GM12878 (cell line): ENCODE measurements at regions of chr6 and their contacts with region 1.

Region 1: DNA sequence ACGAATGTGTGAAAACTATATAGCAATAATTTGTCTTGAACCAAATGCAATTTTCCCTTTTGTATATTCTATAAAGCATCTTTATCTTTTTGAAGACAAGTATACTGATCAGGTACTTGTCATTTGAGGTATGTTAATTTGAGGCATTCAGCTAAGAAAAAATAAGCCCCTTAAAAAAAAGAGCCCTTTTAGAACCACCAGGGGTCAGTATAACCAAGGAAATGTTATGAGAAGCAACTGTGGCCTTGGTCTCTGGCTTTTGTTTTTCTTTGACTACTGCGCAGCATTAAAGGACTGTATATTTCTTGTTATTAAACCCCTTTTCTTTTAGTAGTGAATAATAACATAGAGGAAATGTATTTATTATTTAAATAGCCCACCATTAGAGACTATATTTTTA is 43.1 kb downstream of the CD109 start:
- DNase-seq: no peak
- ATAC-seq: peak; percentile 88
- H3K4me3 ChIP-seq: no peak overlapping the region
- H3K27ac ChIP-seq: no peak overlapping the region
- H3K4me1 ChIP-seq: no peaks in the 10 kb centered on the region; the same call in 1 of the 2 replicates
- H3K27me3 ChIP-seq: no peaks in the 10 kb centered on the region
- CTCF ChIP-seq: peak; percentile 57 to 81 (median 66)
- EP300 ChIP-seq: no peak
- POLR2A ChIP-seq: no peak
- RAD21 ChIP-seq: peak; percentile 94

Region 2: GRCh38 chr6:73675466-73676098 is 63.5 kb before region 1 on chr6:
- CTCF ChIA-PET with region 1: interaction called, 213 read pairs
- POLR2A ChIA-PET with region 1: no interaction called
- RAD21 ChIA-PET with region 1: interaction called, 63 read pairs
- SMC1A ChIA-PET with region 1: interaction called, 120 read pairs
- in situ Hi-C with region 1: loop called (anchors 5 kb)
- intact Hi-C with region 1: no loop called
- DNase-seq: no peak
- ATAC-seq: peak; percentile 98
- H3K4me3 ChIP-seq: no peak overlapping the region
- H3K27ac ChIP-seq: no peak overlapping the region
- H3K4me1 ChIP-seq: no peaks in the 10 kb centered on the region
- H3K27me3 ChIP-seq: no peaks in the 10 kb centered on the region
- CTCF ChIP-seq: peak; percentile 86 to 94 (median 90)
- EP300 ChIP-seq: no peak
- POLR2A ChIP-seq: no peak
- RAD21 ChIP-seq: peak; percentile 92

Region 3: DNA sequence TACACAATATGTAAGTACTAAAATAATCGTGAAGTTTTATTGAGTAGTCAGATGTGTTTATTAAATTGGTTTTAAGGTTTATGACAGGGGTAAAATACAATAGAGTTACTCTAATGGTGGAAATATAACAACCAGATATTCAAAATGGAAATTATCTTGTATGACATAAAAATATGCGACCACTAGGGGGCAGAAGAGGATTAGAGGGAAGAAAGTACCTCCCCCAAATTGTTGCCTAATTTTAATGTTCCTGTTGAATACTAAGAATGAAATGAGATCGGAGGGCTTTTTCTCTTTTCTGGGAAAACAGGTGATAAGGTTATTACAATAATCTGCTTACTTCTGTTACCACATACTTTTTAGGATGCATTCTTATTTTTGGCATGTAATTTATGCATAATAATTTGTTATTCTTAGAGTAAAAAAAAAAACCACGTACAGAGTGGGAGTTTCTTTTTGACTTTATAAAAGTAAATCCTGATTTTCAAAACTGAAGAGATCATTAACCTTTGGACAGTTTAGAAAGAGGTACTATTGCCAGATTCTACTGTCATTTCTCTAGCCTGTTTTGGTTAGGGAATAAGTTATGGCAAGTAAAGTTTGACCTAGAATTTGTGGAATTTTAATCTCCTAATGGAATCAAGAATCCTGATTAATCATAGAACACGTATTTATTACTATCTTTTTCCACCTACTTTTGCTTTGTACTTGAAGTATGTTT is 116.1 kb after region 1 on chr6:
- CTCF ChIA-PET with region 1: interaction called, 4 read pairs
- POLR2A ChIA-PET with region 1: no interaction called
- RAD21 ChIA-PET with region 1: interaction called, 4 read pairs
- SMC1A ChIA-PET with region 1: interaction called, 6 read pairs
- in situ Hi-C with region 1: no loop called
- intact Hi-C with region 1: loop called (anchors 2 kb)
- DNase-seq: no peak
- ATAC-seq: peak; percentile 71
- H3K4me3 ChIP-seq: no peak overlapping the region
- H3K27ac ChIP-seq: no peak overlapping the region
- H3K4me1 ChIP-seq: no peaks in the 10 kb centered on the region
- H3K27me3 ChIP-seq: no peaks in the 10 kb centered on the region
- CTCF ChIP-seq: peak; percentile 52 to 62 (median 59); a peak in 5 of 6 replicates
- EP300 ChIP-seq: no peak
- POLR2A ChIP-seq: no peak
- RAD21 ChIP-seq: peak; percentile 66

Region 4: DNA sequence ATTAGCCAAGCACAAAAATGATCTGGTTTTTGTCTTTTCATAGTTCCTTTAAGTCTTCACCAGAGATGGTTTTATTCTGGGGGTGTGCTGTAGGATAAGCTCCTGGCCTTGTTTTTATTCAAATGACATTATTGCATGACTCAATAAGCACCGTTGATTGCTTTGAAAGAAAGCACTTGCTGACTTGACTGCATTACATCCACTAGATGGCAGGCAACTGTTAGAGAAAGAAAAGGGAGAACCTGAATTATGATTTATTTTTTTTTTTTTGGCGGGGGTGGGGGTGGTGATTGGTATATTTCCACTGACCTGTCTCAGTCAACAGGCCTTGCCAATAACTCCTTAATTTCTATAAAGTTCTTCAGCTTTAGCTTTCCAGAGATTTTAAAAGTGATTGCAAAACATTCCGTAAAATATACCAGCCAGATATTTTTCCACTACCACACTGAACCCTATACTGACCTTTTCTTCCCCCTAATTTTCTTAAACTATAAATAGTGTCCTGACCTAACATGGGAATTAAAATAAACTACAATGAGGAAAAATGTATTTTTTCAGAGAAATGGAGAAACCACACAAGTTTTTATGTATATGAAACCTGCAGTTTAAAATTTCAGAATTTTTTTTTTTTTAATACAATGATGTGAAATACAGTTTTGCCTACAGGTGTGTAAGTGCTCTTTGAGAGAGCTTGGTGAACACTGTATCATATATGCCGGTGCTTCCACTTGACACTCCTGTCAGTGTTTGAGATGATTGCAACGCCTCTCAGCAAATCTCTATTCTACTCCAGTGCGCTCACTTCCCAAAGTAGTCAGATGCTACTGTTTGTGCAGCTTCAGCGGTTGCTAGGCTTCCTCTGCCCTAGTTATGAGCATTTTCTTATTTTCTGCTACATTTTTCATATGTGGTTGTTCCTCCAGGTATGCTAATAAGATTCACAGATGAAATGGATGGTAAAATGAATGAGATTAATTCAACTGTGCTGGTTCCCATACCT is 231.2 kb after region 1 on chr6:
- CTCF ChIA-PET with region 1: interaction called, 6 read pairs
- POLR2A ChIA-PET with region 1: no interaction called
- RAD21 ChIA-PET with region 1: no interaction called
- SMC1A ChIA-PET with region 1: interaction called, 3 read pairs
- in situ Hi-C with region 1: no loop called
- intact Hi-C with region 1: loop called (anchors 5 kb)
- DNase-seq: no peak
- ATAC-seq: peak; percentile 72
- H3K4me3 ChIP-seq: no peak overlapping the region
- H3K27ac ChIP-seq: no peak overlapping the region
- H3K4me1 ChIP-seq: no peaks in the 10 kb centered on the region
- H3K27me3 ChIP-seq: no peaks in the 10 kb centered on the region; a peak in 1 of 4 replicates
- CTCF ChIP-seq: peak; percentile 30 to 52 (median 46); a peak in 5 of 6 replicates
- EP300 ChIP-seq: no peak
- POLR2A ChIP-seq: no peak
- RAD21 ChIP-seq: peak; percentile 61

Region 5: DNA sequence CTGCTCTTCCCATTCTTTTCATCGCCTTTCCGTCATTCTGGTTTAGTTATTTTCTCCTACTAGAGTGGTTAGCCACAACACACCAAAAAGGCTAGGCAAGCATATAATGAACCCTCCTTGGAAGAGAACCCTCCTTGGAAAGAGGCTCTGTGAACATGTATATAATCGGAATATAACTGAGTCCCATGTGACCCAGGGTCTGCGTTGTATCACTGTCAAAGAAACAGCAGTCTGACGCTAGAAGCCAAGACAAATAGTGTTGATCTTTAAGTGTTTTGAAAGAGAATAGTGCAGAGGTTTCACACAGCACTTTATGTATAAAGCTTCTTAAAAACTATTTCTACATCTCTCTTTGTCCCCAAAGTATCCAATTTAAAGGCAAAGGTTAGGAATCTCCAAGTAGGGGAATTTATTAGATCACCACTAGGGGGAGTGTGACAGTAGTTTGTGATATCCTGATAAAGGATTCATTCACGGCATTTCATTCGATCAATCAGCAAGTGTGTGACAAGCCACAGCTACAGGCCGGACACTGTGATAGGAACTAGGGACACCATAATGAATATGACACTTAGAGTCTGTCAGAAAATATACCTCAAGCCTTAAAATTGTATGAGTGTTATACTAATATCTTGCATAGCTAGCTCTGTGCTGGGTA is 352.2 kb after region 1 on chr6:
- CTCF ChIA-PET with region 1: interaction called, 5 read pairs
- POLR2A ChIA-PET with region 1: no interaction called
- RAD21 ChIA-PET with region 1: no interaction called
- SMC1A ChIA-PET with region 1: no interaction called
- in situ Hi-C with region 1: no loop called
- intact Hi-C with region 1: loop called (anchors 5 kb)
- DNase-seq: no peak
- ATAC-seq: peak; percentile 73
- H3K4me3 ChIP-seq: no peak overlapping the region
- H3K27ac ChIP-seq: no peak overlapping the region
- H3K4me1 ChIP-seq: no peaks in the 10 kb centered on the region
- H3K27me3 ChIP-seq: no peaks in the 10 kb centered on the region
- CTCF ChIP-seq: peak; percentile 47 to 70 (median 56); a peak in 5 of 6 replicates
- EP300 ChIP-seq: no peak
- POLR2A ChIP-seq: no peak
- RAD21 ChIP-seq: peak; percentile 42